Mammary epithelial cell (primary cell): ENCODE measurements at regions of chr4 and their contacts with region 1.

Region 1: DNA sequence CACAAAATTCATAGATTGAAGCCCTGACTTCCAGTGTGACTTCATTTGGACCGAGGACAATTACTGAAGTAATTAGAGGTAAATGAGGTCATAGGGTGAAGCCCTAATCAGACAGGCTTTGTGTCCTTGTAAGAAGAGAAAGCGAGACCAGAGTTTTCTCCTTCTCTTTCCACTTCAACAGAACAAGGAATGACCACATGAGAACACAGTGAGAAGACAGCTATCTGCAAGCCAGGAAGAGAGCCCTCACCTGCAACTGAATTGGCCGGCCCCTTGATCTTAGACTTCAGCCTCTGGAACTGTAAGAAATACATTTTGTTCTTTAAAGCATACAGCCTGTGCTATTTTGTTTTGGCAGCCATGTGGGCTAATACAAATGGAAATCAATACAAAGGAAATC is 67.1 kb upstream of the PRKG2 start:
- DNase-seq: no peak
- H3K4me3 ChIP-seq: no peak overlapping the region
- H3K27ac ChIP-seq: no peak overlapping the region
- H3K4me1 ChIP-seq: no peaks in the 10 kb centered on the region
- H3K27me3 ChIP-seq: no peaks in the 10 kb centered on the region
- CTCF ChIP-seq: no peak

Region 2: DNA sequence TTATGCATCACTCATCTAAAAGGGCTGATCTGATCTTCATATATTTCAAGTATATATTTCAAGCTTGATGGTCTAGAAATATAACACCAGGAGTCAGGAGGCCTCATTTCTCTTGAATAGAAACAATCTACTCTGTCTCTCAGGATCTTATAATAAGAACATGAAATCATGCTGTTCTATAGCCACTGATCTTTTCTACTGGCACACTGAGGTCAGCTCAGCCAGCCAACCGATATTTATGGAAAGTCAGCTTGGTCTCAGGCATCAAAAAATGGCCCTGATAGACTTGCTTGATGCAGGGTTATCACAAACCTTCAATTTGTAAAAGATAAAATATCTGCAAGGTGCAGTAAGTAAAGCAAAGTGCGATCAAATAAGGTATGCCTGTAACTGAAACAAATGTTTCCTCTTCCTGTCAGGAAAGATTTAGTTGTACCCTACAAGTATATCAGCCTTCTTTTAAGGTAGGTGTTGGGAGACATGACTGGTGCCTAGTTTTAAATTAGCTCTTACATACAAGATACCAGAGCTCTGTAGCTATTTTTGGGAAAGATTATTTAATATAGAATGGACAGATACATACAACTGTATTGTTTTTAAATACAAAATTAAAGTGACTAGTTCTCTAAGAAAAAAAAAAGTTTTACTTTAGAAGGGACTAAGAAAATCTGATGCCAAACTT is 188.3 kb before region 1 on chr4:
- CTCF ChIA-PET with region 1: no interaction called
- dilution Hi-C with region 1: no loop called
- in situ Hi-C with region 1: no loop called
- intact Hi-C with region 1: no loop called
- DNase-seq: no peak
- H3K4me3 ChIP-seq: no peak overlapping the region
- H3K27ac ChIP-seq: no peak overlapping the region
- H3K4me1 ChIP-seq: no peaks in the 10 kb centered on the region
- H3K27me3 ChIP-seq: no peaks in the 10 kb centered on the region
- CTCF ChIP-seq: no peak

Region 3: GRCh38 chr4:81136161-81136905 is 145.8 kb before region 1 on chr4:
- CTCF ChIA-PET with region 1: interaction called, 15 read pairs
- dilution Hi-C with region 1: no loop called
- in situ Hi-C with region 1: no loop called
- intact Hi-C with region 1: no loop called
- DNase-seq: no peak
- H3K4me3 ChIP-seq: no peak overlapping the region
- H3K27ac ChIP-seq: no peak overlapping the region
- H3K4me1 ChIP-seq: no peaks in the 10 kb centered on the region
- H3K27me3 ChIP-seq: no peaks in the 10 kb centered on the region
- CTCF ChIP-seq: no peak

Region 4: GRCh38 chr4:81227968-81228367 is 54.2 kb before region 1 on chr4:
- CTCF ChIA-PET with region 1: no interaction called
- dilution Hi-C with region 1: no loop called
- in situ Hi-C with region 1: no loop called
- intact Hi-C with region 1: no loop called
- DNase-seq: no peak
- H3K4me3 ChIP-seq: no peak overlapping the region
- H3K27ac ChIP-seq: no peak overlapping the region
- H3K4me1 ChIP-seq: no peaks in the 10 kb centered on the region
- H3K27me3 ChIP-seq: no peaks in the 10 kb centered on the region
- CTCF ChIP-seq: no peak